Mammary epithelial cell (primary cell): ENCODE measurements at regions of chr9 and their contacts with region 1.

Region 1: GRCh38 chr9:112112941-112113681 is 62.0 kb downstream of the SUSD1 start:
- DNase-seq: peak; percentile 85
- H3K4me3 ChIP-seq: no peak overlapping the region
- H3K27ac ChIP-seq: peak overlapping the region; percentile 75
- H3K4me1 ChIP-seq: peaks cover 27% of the 10 kb centered on the region
- H3K27me3 ChIP-seq: no peaks in the 10 kb centered on the region
- CTCF ChIP-seq: peak; percentile 83 to 89

Region 2: GRCh38 chr9:111582888-111583287 is 530.2 kb before region 1 on chr9:
- CTCF ChIA-PET with region 1: no interaction called
- dilution Hi-C with region 1: no loop called
- in situ Hi-C with region 1: no loop called
- intact Hi-C with region 1: no loop called
- DNase-seq: peak; percentile 23
- H3K4me3 ChIP-seq: no peak overlapping the region
- H3K27ac ChIP-seq: no peak overlapping the region
- H3K4me1 ChIP-seq: no peaks in the 10 kb centered on the region
- H3K27me3 ChIP-seq: no peaks in the 10 kb centered on the region
- CTCF ChIP-seq: no peak

Region 3: GRCh38 chr9:112174218-112174964 is 61.3 kb after region 1 on chr9:
- CTCF ChIA-PET with region 1: no interaction called
- dilution Hi-C with region 1: no loop called
- in situ Hi-C with region 1: no loop called
- intact Hi-C with region 1: loop called (anchors 2 kb)
- DNase-seq: peak; percentile 54
- H3K4me3 ChIP-seq: peak overlapping the region; percentile 2 to 47 (median 40)
- H3K27ac ChIP-seq: peak overlapping the region; percentile 9
- H3K4me1 ChIP-seq: peaks cover 16% of the 10 kb centered on the region
- H3K27me3 ChIP-seq: no peaks in the 10 kb centered on the region
- CTCF ChIP-seq: no peak

Region 4: GRCh38 chr9:112233768-112234167 is 120.7 kb after region 1 on chr9:
- CTCF ChIA-PET with region 1: no interaction called
- dilution Hi-C with region 1: no loop called
- in situ Hi-C with region 1: no loop called
- intact Hi-C with region 1: loop called (anchors 10 kb)
- DNase-seq: peak; percentile 54
- H3K4me3 ChIP-seq: no peak overlapping the region
- H3K27ac ChIP-seq: no peak overlapping the region
- H3K4me1 ChIP-seq: peaks cover 8% of the 10 kb centered on the region
- H3K27me3 ChIP-seq: no peaks in the 10 kb centered on the region
- CTCF ChIP-seq: no peak

Region 5: DNA sequence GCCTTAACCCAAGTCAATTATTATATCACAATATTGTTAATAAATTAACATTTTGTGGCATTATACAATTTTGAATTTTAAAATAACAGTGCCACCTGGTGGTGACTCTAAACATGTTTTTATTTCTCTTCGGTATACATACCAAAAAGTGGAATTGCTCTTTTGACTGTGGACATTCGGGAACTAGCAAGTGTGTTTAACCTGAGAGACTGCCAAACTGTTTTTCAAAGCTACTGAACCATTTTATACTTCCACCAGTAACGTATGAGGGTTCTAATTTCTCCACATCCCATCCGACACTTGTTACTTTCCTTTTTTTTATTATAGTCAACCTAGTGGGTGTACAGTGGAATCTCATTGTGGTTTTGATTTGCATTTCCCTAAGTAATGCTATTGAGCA is 248.5 kb after region 1 on chr9:
- CTCF ChIA-PET with region 1: no interaction called
- dilution Hi-C with region 1: no loop called
- in situ Hi-C with region 1: loop called in 1 of 2 experiments (anchors 5 kb)
- intact Hi-C with region 1: loop called (anchors 1 kb)
- DNase-seq: peak; percentile 29
- H3K4me3 ChIP-seq: no peak overlapping the region
- H3K27ac ChIP-seq: no peak overlapping the region
- H3K4me1 ChIP-seq: peaks cover 6% of the 10 kb centered on the region
- H3K27me3 ChIP-seq: no peaks in the 10 kb centered on the region
- CTCF ChIP-seq: peak; percentile 24 to 31

Region 6: DNA sequence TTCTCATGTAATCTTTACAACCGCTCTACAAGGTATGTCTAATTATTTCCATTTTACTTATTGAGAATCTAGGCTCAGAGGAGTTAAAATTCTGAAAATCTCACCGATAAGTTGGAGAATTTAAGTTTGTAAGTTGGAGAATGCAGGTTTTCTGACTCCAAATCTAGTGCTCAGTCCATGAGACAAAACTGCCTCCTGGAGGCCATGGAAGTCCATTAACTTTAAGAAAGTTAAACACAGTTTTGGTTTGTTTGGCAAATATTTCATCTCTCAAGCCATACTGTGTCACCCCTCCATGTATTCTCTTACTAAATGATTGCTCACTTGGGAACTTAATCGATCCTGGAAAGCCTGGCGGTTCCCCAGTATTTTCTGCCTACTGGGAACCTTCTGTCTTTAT is 552.2 kb after region 1 on chr9:
- CTCF ChIA-PET with region 1: no interaction called
- dilution Hi-C with region 1: no loop called
- in situ Hi-C with region 1: no loop called
- intact Hi-C with region 1: loop called (anchors 10 kb)
- DNase-seq: peak; percentile 11
- H3K4me3 ChIP-seq: no peak overlapping the region
- H3K27ac ChIP-seq: no peak overlapping the region
- H3K4me1 ChIP-seq: no peaks in the 10 kb centered on the region
- H3K27me3 ChIP-seq: no peaks in the 10 kb centered on the region
- CTCF ChIP-seq: peak; percentile 38 to 55